Breast epithelium (tissue), 4 donors: ENCODE measurements at regions of chr13 and their contacts with region 1.

Region 1: GRCh38 chr13:89361909-89362308 is 1690.7 kb downstream of the SLITRK5 start:
- DNase-seq: no peak
- H3K4me3 ChIP-seq: no peak overlapping the region
- H3K27ac ChIP-seq: no peak overlapping the region
- H3K4me1 ChIP-seq: no peaks in the 10 kb centered on the region
- H3K27me3 ChIP-seq: no peaks in the 10 kb centered on the region
- CTCF ChIP-seq: no peak
- POLR2A ChIP-seq: no peak

Region 2: GRCh38 chr13:89324582-89324981 is 37.3 kb before region 1 on chr13:
- intact Hi-C with region 1: no loop called
- DNase-seq: no peak
- H3K4me3 ChIP-seq: no peak overlapping the region
- H3K27ac ChIP-seq: no peak overlapping the region
- H3K4me1 ChIP-seq: no peaks in the 10 kb centered on the region
- H3K27me3 ChIP-seq: no peaks in the 10 kb centered on the region
- CTCF ChIP-seq: no peak
- POLR2A ChIP-seq: no peak

Region 3: DNA sequence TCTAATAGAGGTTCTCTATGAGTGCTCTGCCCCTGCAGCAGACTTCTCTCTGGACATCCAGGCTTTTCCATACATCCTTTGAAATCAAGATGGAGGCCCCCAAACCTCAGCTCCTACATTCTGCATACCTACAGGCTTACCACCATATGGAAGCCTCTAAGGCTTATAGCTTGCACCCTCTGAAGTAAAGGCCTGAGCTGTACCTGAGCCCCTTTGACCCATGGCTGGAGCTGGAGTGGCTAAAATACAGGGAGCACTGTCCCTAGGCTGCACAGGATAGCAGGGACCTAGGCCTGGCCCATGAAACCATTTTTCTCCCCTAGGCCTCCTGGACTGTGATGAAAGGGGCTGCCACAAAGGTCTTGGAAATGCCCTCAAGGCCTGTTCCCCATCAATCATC is 899.4 kb after region 1 on chr13:
- intact Hi-C with region 1: loop called (anchors 10 kb)
- DNase-seq: no peak
- H3K4me3 ChIP-seq: no peak overlapping the region
- H3K27ac ChIP-seq: no peak overlapping the region
- H3K4me1 ChIP-seq: no peaks in the 10 kb centered on the region
- H3K27me3 ChIP-seq: no peaks in the 10 kb centered on the region
- CTCF ChIP-seq: no peak
- POLR2A ChIP-seq: no peak